ENCODE measurements at regions of chr12 and their contacts with region 1.

Region 1: DNA sequence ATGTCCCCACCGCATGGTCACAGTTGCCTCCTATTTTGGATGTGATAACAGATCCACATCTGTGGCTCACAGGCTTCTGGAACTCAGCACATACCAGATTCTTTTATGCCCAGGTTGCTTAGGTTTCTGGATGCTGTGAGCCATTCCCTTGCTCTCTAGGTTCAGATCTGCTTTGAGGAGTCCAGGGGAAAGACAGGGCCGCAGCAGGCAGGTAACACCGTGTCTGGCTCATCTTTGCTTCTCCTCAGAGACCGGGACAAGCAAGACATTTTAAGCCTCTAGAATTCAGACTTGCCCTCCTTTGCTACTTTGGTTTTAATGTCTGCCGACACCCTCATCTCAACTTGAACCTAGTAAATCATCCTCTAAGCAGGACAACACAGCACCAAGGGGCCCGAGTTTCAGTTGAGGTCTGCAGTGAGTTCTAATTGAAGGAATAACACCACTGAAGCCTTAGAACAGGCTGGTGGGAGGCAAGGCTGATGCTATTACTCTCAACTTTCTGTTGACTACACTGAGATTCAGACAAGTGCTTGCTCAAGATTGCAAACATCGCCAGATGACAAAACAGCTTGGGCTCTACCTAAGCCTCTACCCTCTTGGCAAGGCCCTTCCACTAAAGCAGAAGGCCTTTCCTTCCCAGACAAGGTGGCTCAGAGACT is 55.3 kb downstream of the MDM2 start:
- DNase-seq: no peak
- CTCF ChIP-seq: no peak

Region 2: DNA sequence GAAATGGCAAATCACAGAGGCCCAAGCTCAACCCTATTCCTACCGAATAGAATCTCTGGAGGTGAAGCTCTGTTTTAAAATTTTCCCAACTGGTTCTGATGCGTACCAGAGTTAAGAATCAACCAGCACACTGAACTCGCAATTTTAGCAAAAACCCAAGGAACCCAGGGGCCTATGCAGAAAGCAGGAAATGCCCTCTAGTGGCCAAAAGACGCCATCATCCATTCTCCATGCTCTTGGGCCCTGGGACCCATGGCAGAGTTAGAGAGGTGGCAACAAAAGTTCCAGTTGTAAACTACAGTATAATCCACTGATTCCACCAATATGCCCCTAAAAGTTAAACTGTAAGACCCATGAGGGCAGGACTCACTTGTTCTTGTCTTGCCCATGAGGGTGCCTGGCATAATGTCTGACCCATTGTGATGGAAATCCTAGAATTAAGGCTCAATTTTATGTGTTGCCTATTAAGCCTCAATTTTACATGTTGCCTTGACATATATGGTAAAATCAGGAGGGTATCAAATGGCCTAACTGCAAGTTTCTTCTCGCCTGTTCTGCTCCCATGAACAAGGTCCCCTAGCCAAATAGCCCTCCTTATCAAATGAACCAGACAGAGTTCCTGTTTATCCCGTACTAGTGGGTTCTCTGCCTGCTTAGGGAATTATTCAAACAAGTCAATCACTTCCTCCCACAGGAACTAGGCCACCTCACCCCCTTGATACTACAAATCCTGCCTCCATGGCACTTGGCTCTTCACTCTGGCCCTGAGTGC is 207.3 kb after region 1 on chr12:
- in situ Hi-C with region 1: loop called (anchors 5 kb)
- DNase-seq: peak; percentile 63
- CTCF ChIP-seq: peak; percentile 81